Caco-2 (cell line): ENCODE measurements at regions of chr11 and their contacts with region 1.

Region 1: DNA sequence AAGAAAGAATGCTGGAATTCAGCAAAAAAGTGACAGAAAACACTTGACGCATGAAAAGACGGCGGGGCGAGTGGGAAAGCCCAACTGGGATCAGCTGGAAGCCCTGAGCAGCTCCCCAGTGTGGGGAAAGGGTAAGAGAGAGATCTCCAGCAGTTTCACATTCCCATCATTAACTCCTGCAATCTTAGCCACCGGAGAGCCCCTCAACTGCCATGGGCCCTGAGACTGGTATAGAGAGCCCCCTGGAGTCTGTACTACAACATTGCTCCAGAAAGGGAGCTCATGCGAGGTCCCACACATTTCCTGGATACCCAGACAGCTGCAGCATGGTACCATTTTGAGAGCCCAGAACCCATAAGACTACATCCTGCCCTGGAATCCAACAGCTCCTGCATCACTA is 31.1 kb downstream of the MRGPRX4 start:
- DNase-seq: peak in 1 of 2 experiments; percentile 42
- H3K4me3 ChIP-seq: no peak overlapping the region
- H3K4me3 Mint-ChIP-seq: no peak overlapping the region
- H3K27ac Mint-ChIP-seq: no peak overlapping the region
- H3K4me1 ChIP-seq: no peaks in the 10 kb centered on the region
- H3K4me1 Mint-ChIP-seq: no peaks in the 10 kb centered on the region
- H3K27me3 ChIP-seq: no peaks in the 10 kb centered on the region; the same call in 1 of the 2 replicates
- H3K27me3 Mint-ChIP-seq: peaks cover 23% of the 10 kb centered on the region
- CTCF ChIP-seq: peak; percentile 56 to 62

Region 2: GRCh38 chr11:17927681-17928347 is 275.9 kb before region 1 on chr11:
- CTCF ChIA-PET with region 1: no interaction called
- POLR2A ChIA-PET with region 1: no interaction called
- intact Hi-C with region 1: no loop called
- DNase-seq: no peak
- H3K4me3 ChIP-seq: no peak overlapping the region
- H3K4me3 Mint-ChIP-seq: no peak overlapping the region
- H3K27ac Mint-ChIP-seq: no peak overlapping the region
- H3K4me1 ChIP-seq: no peaks in the 10 kb centered on the region
- H3K4me1 Mint-ChIP-seq: no peaks in the 10 kb centered on the region
- H3K27me3 ChIP-seq: no peaks in the 10 kb centered on the region
- H3K27me3 Mint-ChIP-seq: no peaks in the 10 kb centered on the region
- CTCF ChIP-seq: no peak

Region 3: GRCh38 chr11:18115360-18116127 is 88.2 kb before region 1 on chr11:
- CTCF ChIA-PET with region 1: interaction called, 34 read pairs
- POLR2A ChIA-PET with region 1: no interaction called
- intact Hi-C with region 1: loop called (anchors 1 kb)
- DNase-seq: peak; percentile 77 to 80
- H3K4me3 ChIP-seq: no peak overlapping the region
- H3K4me3 Mint-ChIP-seq: no peak overlapping the region
- H3K27ac Mint-ChIP-seq: no peak overlapping the region
- H3K4me1 ChIP-seq: no peaks in the 10 kb centered on the region
- H3K4me1 Mint-ChIP-seq: no peaks in the 10 kb centered on the region
- H3K27me3 ChIP-seq: no peaks in the 10 kb centered on the region
- H3K27me3 Mint-ChIP-seq: peaks cover 17% of the 10 kb centered on the region
- CTCF ChIP-seq: peak; percentile 88 to 93

Region 4: DNA sequence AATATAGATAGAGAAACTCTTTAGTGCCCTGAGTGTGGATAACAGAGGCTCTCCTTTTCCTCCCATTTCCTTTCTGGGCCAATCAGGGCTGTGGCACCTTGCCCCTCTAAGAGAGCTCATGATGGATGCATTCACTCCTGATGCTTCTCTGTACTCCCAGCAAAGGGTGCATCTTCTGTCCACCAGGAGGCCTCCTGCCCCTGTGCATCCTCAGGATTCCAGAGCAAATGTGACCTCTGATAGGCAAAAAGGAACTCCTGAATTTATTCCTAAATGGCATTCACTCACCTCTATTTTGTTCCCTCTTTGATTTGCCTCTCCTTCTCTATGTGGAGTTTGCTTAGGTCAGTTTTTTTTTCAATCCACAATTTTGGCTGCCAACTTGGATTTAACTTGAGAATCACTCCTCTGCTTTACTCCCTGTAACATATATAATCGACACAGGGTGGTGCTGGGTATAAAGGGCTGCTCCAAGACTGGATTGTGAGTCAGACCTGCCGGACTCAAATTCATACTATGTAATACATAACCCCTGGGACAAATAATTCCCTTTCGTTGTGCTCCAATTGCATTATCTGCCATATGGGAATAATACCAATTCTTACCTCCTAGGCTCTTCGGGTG is 32.2 kb before region 1 on chr11:
- CTCF ChIA-PET with region 1: interaction called, 15 read pairs
- POLR2A ChIA-PET with region 1: no interaction called
- intact Hi-C with region 1: loop called (anchors 2 kb)
- DNase-seq: peak; percentile 44 to 54
- H3K4me3 ChIP-seq: no peak overlapping the region
- H3K4me3 Mint-ChIP-seq: no peak overlapping the region
- H3K27ac Mint-ChIP-seq: no peak overlapping the region
- H3K4me1 ChIP-seq: no peaks in the 10 kb centered on the region
- H3K4me1 Mint-ChIP-seq: no peaks in the 10 kb centered on the region
- H3K27me3 ChIP-seq: peaks cover 3% of the 10 kb centered on the region
- H3K27me3 Mint-ChIP-seq: peaks cover 21% of the 10 kb centered on the region
- CTCF ChIP-seq: peak; percentile 75 to 86

Region 5: GRCh38 chr11:18243783-18244362 is 40.1 kb after region 1 on chr11:
- CTCF ChIA-PET with region 1: no interaction called
- POLR2A ChIA-PET with region 1: no interaction called
- intact Hi-C with region 1: no loop called
- DNase-seq: peak; percentile 67 to 81
- H3K4me3 ChIP-seq: no peak overlapping the region
- H3K4me3 Mint-ChIP-seq: no peak overlapping the region
- H3K27ac Mint-ChIP-seq: no peak overlapping the region
- H3K4me1 ChIP-seq: no peaks in the 10 kb centered on the region
- H3K4me1 Mint-ChIP-seq: no peaks in the 10 kb centered on the region
- H3K27me3 ChIP-seq: no peaks in the 10 kb centered on the region
- H3K27me3 Mint-ChIP-seq: peaks cover 9% of the 10 kb centered on the region
- CTCF ChIP-seq: peak; percentile 85 to 89

Region 6: DNA sequence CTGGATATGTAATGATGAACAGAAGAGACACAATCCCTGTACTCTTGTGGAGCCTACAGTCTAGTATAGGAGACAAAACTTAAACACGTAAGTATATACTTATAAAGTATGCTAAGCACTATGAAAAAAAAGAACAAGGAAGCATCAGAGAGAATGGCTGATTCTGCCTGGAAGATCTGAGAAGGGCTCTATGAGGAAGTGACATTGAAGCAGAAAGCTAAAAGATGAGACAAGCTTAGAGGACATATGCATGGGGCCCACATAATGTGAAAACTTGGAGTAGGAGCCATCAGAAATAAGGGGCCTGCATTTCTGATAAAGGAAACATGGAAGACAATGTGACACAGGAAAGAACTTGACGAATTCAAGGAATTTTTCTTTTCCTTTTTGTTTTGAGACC is 78.9 kb after region 1 on chr11:
- CTCF ChIA-PET with region 1: no interaction called
- POLR2A ChIA-PET with region 1: no interaction called
- intact Hi-C with region 1: no loop called
- DNase-seq: no peak
- H3K4me3 ChIP-seq: no peak overlapping the region
- H3K4me3 Mint-ChIP-seq: no peak overlapping the region
- H3K27ac Mint-ChIP-seq: no peak overlapping the region
- H3K4me1 ChIP-seq: no peaks in the 10 kb centered on the region
- H3K4me1 Mint-ChIP-seq: no peaks in the 10 kb centered on the region
- H3K27me3 ChIP-seq: no peaks in the 10 kb centered on the region
- H3K27me3 Mint-ChIP-seq: no peaks in the 10 kb centered on the region
- CTCF ChIP-seq: no peak

Region 7: DNA sequence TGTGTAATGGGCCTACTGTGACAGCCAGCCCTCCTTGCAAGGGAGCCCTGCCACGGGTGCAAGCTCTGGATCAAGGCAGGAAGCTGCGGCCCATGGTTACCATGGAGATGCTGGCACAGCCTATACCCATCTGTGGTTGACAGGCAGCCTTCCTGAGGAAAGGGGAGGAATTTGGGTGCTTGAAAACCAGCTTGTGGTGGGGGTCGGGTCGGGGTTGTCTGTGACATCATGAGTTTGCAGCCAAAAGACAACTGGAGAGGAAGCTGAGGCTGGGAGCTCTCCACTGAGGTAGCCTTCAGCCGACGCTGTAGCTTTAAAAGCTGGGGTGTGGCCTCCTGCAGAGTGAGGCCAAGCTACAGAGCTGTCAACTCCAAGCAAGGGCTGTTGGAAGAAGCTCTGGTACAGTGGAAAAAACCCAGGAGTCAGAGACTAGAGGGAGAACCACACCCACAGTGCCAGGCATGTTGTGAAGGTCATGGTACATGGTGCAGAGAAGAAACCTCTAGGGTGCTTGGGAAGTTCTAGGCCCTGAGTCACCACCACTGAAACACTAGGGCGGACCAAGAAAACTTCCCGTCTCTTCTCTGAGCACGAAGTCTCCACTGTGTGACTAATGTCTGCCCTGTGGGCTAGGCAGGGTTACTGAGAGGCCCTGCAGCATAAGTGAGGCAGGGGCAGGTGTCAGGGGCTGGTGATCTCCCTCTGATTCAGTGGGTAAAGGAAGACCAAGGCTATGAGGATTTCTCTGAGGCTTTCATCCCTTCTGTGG is 179.8 kb after region 1 on chr11:
- CTCF ChIA-PET with region 1: no interaction called
- POLR2A ChIA-PET with region 1: no interaction called
- intact Hi-C with region 1: no loop called
- DNase-seq: peak; percentile 54 to 81
- H3K4me3 ChIP-seq: no peak overlapping the region
- H3K4me3 Mint-ChIP-seq: peak overlapping the region; percentile 48
- H3K27ac Mint-ChIP-seq: peak overlapping the region; percentile 90
- H3K4me1 ChIP-seq: peaks cover 21% of the 10 kb centered on the region
- H3K4me1 Mint-ChIP-seq: peaks cover 17% of the 10 kb centered on the region
- H3K27me3 ChIP-seq: no peaks in the 10 kb centered on the region
- H3K27me3 Mint-ChIP-seq: no peaks in the 10 kb centered on the region
- CTCF ChIP-seq: no peak